ENCODE measurements at regions of chr6 and their contacts with region 1.

Region 1: GRCh38 chr6:146857180-146857979 is 258.6 kb downstream of the ADGB start:
- DNase-seq: peak; percentile 83
- H3K4me3 Mint-ChIP-seq: peak overlapping the region; percentile 59
- H3K27ac Mint-ChIP-seq: peak overlapping the region; percentile 73
- H3K4me1 Mint-ChIP-seq: peaks cover 32% of the 10 kb centered on the region
- H3K27me3 Mint-ChIP-seq: peaks cover 4% of the 10 kb centered on the region

Region 2: DNA sequence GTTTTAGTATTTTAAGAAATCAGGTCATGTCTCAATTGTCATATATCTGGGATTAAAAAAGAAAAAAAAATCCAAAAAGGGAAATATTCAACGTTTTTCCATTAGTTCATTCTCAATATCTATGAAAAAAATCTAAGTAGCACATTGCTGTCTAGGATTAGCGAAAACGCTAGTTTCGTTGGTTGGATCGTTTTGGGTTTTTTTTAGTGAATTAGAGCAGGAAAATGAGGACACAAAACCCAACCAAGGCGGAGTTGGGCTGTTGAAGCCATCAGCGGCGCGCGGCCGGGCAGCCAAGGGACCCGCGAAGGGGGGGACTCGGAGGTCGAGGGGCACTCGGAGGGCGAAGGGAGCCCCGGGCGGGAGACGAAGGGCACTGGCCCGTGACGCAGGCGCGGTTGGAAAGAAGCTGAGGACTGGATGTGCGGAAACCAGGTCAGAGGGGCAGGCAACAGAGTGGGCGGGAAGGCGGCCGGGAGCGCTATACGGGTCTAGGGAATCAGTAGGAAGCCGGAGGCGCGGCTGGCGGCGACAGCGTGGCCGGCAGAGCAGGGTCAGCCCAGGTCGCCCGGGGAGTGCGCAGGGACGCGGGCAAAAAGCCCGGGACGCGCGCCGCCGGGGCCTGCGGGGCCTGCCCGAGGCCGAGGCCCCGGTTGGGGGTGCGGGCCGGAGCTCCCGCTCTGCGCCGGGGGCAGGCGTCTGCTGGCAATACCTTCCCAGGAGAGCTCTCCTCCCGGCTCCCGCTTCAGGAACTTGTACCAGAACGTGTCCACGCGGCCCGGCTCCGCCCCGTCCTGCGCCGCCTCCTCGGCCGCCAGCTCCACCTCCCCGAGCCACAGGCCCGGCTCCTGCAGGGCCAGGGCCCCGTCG is 1122.7 kb before region 1 on chr6:
- CTCF ChIA-PET with region 1: no interaction called
- POLR2A ChIA-PET with region 1: no interaction called
- intact Hi-C with region 1: loop called (anchors 10 kb)
- DNase-seq: peak; percentile 81
- H3K4me3 Mint-ChIP-seq: peak overlapping the region; percentile 89
- H3K27ac Mint-ChIP-seq: peak overlapping the region; percentile 95
- H3K4me1 Mint-ChIP-seq: peaks cover 22% of the 10 kb centered on the region
- H3K27me3 Mint-ChIP-seq: no peaks in the 10 kb centered on the region

Region 3: GRCh38 chr6:147055821-147056392 is 198.5 kb after region 1 on chr6:
- CTCF ChIA-PET with region 1: no interaction called
- POLR2A ChIA-PET with region 1: no interaction called
- intact Hi-C with region 1: loop called (anchors 2 kb)
- DNase-seq: no peak
- H3K4me3 Mint-ChIP-seq: no peak overlapping the region
- H3K27ac Mint-ChIP-seq: no peak overlapping the region
- H3K4me1 Mint-ChIP-seq: peaks cover 8% of the 10 kb centered on the region
- H3K27me3 Mint-ChIP-seq: no peaks in the 10 kb centered on the region

Region 4: GRCh38 chr6:147194652-147195411 is 337.5 kb after region 1 on chr6:
- CTCF ChIA-PET with region 1: no interaction called
- POLR2A ChIA-PET with region 1: no interaction called
- intact Hi-C with region 1: loop called (anchors 1 kb)
- DNase-seq: no peak
- H3K4me3 Mint-ChIP-seq: peak overlapping the region; percentile 21
- H3K27ac Mint-ChIP-seq: peak overlapping the region; percentile 87
- H3K4me1 Mint-ChIP-seq: peaks cover 21% of the 10 kb centered on the region
- H3K27me3 Mint-ChIP-seq: no peaks in the 10 kb centered on the region

Region 5: GRCh38 chr6:147279427-147279826 is 422.0 kb after region 1 on chr6:
- CTCF ChIA-PET with region 1: no interaction called
- POLR2A ChIA-PET with region 1: no interaction called
- intact Hi-C with region 1: loop called (anchors 1 kb)
- DNase-seq: no peak
- H3K4me3 Mint-ChIP-seq: no peak overlapping the region
- H3K27ac Mint-ChIP-seq: peak overlapping the region; percentile 83
- H3K4me1 Mint-ChIP-seq: peaks cover 41% of the 10 kb centered on the region
- H3K27me3 Mint-ChIP-seq: no peaks in the 10 kb centered on the region

Region 6: DNA sequence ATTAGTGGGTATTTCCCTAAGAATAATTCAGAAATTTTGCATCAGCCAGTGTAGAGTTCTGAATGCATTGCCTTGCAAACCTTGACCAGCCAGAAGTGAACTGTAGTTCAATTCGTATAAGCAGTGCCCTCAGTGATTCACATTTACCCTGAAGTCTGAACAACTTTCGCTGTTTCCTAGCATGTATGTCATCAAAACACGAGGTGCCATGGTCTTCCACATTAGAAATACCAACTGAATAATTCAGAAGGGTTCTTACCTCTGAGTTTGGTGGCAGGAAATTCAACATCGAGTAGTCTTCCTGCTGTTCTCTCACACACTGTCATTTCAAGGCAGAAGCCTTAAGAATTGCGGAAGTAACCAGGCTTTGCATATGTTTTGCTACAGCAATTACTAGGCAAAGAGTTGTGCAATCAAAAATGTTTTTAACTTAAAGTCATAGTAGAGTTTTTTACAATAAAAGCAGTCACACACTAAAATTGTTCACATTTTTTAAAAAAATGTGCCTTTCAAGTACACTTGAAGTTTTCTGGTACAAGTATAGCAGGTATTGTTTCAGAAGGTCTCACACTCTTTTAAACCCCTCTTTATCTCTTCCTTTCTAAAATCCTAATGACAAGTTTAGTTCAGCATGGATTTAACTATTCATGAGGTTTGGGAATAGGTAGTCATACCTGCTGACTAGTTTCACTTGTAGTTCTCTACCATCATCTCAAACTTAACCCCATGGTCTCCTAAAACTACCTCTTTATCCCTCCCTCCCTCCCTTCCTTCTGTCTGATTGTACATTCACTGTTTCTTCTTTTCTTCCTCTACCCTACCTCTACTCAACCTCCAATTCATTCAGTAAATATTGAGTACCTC is 465.2 kb after region 1 on chr6:
- CTCF ChIA-PET with region 1: no interaction called
- POLR2A ChIA-PET with region 1: no interaction called
- intact Hi-C with region 1: loop called (anchors 1 kb)
- DNase-seq: peak; percentile 25
- H3K4me3 Mint-ChIP-seq: peak overlapping the region; percentile 28
- H3K27ac Mint-ChIP-seq: peak overlapping the region; percentile 90
- H3K4me1 Mint-ChIP-seq: peaks cover 17% of the 10 kb centered on the region
- H3K27me3 Mint-ChIP-seq: no peaks in the 10 kb centered on the region

Region 7: DNA sequence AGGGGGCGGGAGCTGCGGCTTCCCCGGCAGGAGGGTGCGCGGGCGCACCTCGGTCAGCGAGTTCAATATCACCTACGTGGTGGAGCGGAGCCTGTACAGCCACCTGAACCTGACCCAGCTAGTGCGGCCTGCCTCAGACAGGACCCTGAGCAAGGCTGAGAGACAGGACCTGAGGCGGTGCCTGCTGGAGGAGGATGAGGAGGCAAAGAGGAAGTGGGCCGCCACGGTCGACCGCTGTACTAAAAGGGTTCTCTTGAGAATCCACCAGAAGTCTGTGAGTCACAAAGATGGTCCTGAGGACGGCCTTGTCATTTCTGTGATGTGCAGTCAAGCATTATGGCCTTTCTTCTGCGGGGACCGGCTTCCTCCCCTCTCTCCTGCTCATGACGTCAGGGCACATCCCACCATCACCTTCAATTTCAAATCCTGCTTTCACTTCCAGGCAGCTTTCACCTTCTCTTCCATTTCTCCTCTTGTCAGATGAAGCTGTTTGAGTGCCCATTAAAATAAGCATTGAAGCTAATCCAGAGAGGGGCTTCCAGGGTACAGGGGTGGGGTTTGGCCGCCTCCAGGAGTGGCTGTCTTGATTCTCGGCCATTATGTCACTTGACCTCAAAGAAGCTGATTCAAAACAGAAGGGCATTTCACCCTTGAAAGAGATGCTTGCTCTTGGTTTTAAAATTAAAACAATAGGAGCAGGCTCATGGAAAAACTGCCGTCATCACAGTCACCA is 1662.9 kb after region 1 on chr6:
- CTCF ChIA-PET with region 1: no interaction called
- POLR2A ChIA-PET with region 1: no interaction called
- intact Hi-C with region 1: loop called (anchors 10 kb)
- DNase-seq: no peak
- H3K4me3 Mint-ChIP-seq: no peak overlapping the region
- H3K27ac Mint-ChIP-seq: no peak overlapping the region
- H3K4me1 Mint-ChIP-seq: peaks cover 24% of the 10 kb centered on the region
- H3K27me3 Mint-ChIP-seq: peaks cover 5% of the 10 kb centered on the region

Measured in activated CD4-positive, alpha-beta memory T cell treated with anti-CD3 and anti-CD28 coated beads for 36 hours (primary cell).